PC-3 (cell line): ENCODE measurements at regions of chr3 and their contacts with region 1.

Region 1: GRCh38 chr3:65963787-65964677 is 74.7 kb downstream of the MAGI1 start:
- DNase-seq: peak; percentile 74
- ATAC-seq: peak; percentile 88
- H3K4me3 ChIP-seq: peak overlapping the region; percentile 45; the same call in 1 of the 2 replicates
- H3K27ac ChIP-seq: peak overlapping the region; percentile 96
- H3K4me1 ChIP-seq: peaks cover 16% of the 10 kb centered on the region
- H3K27me3 ChIP-seq: no peaks in the 10 kb centered on the region
- CTCF ChIP-seq: no peak

Region 2: GRCh38 chr3:65927549-65927948 is 36.5 kb before region 1 on chr3:
- CTCF ChIA-PET with region 1: no interaction called
- POLR2A ChIA-PET with region 1: no interaction called
- intact Hi-C with region 1: no loop called
- DNase-seq: peak; percentile 74
- ATAC-seq: peak; percentile 96
- H3K4me3 ChIP-seq: no peak overlapping the region
- H3K27ac ChIP-seq: no peak overlapping the region
- H3K4me1 ChIP-seq: peaks cover 10% of the 10 kb centered on the region
- H3K27me3 ChIP-seq: no peaks in the 10 kb centered on the region
- CTCF ChIP-seq: no peak

Region 3: GRCh38 chr3:65945480-65945879 is 18.6 kb before region 1 on chr3:
- CTCF ChIA-PET with region 1: no interaction called
- POLR2A ChIA-PET with region 1: no interaction called
- intact Hi-C with region 1: loop called (anchors 1 kb)
- DNase-seq: peak; percentile 79
- ATAC-seq: peak; percentile 92
- H3K4me3 ChIP-seq: no peak overlapping the region
- H3K27ac ChIP-seq: peak overlapping the region; percentile 59
- H3K4me1 ChIP-seq: peaks cover 16% of the 10 kb centered on the region
- H3K27me3 ChIP-seq: no peaks in the 10 kb centered on the region
- CTCF ChIP-seq: no peak